ENCODE measurements at regions of chr6 and their contacts with region 1.

Region 1: GRCh38 chr6:30326526-30327260 is at the start of gene TRIM39:
- DNase-seq: peak; percentile 26
- ATAC-seq: peak; percentile 80
- H3K4me3 ChIP-seq: peak within 1 kb of the TSS; percentile 95
- H3K27ac ChIP-seq: peak within 1 kb of the TSS; percentile 88
- H3K4me1 ChIP-seq: peaks cover 10% of the 10 kb centered on the region
- H3K27me3 ChIP-seq: no peaks in the 10 kb centered on the region
- CTCF ChIP-seq: 0 out of 6 replicates have a peak, but pooled peaks of 1 of the 3 experiments have one; percentile 5
- EP300 ChIP-seq: no peak
- POLR2A ChIP-seq: peak; percentile 90
- RAD21 ChIP-seq: no peak
- polyA plus RNA-seq, gene TRIM39: 3.0 to 3.1 TPM

Region 2: GRCh38 chr6:30315156-30315555 is 11.5 kb before region 1 on chr6:
- CTCF ChIA-PET with region 1: no interaction called
- POLR2A ChIA-PET with region 1: interaction called, 14 read pairs
- RAD21 ChIA-PET with region 1: interaction called, 3 read pairs
- SMC1A ChIA-PET with region 1: interaction called, 4 read pairs
- in situ Hi-C with region 1: no loop called
- intact Hi-C with region 1: no loop called
- DNase-seq: no peak
- ATAC-seq: no peak
- H3K4me3 ChIP-seq: no peak overlapping the region
- H3K27ac ChIP-seq: no peak overlapping the region
- H3K4me1 ChIP-seq: no peaks in the 10 kb centered on the region
- H3K27me3 ChIP-seq: no peaks in the 10 kb centered on the region
- CTCF ChIP-seq: no peak
- EP300 ChIP-seq: no peak
- POLR2A ChIP-seq: no peak
- RAD21 ChIP-seq: no peak

Region 3: DNA sequence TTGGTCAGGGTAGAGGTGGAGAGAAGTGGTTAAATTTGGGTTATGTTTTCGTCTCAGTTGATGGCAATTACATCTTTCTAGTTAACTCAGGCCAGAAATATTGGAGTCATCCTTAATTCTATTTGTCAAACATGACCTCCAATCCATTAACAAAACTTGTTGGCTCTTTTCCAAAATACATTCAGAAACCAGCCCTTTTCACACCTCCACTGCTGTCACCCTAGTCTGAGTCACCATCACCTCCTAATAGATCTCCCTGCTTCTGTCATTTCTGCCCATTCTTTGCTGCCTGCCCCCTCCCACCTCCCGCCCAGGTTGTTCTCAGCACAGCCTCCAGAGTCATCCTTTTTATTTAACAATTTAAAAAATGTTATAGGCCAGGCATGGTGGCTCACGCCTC is 241.6 kb after region 1 on chr6:
- CTCF ChIA-PET with region 1: no interaction called
- POLR2A ChIA-PET with region 1: no interaction called
- RAD21 ChIA-PET with region 1: no interaction called
- SMC1A ChIA-PET with region 1: no interaction called
- in situ Hi-C with region 1: no loop called
- intact Hi-C with region 1: no loop called
- DNase-seq: no peak
- ATAC-seq: peak; percentile 34
- H3K4me3 ChIP-seq: no peak overlapping the region
- H3K27ac ChIP-seq: no peak overlapping the region
- H3K4me1 ChIP-seq: peaks cover 15% of the 10 kb centered on the region
- H3K27me3 ChIP-seq: no peaks in the 10 kb centered on the region
- CTCF ChIP-seq: no peak
- EP300 ChIP-seq: no peak
- POLR2A ChIP-seq: no peak
- RAD21 ChIP-seq: no peak